K562 (cell line): ENCODE measurements at regions of chr1 and their contacts with region 1.

Region 1: GRCh38 chr1:233440951-233441401 is 113.5 kb downstream of the MAP3K21 start:
- DNase-seq: peak; percentile 37 to 79 (median 52)
- ATAC-seq: peak; percentile 90
- H3K4me3 ChIP-seq: no peak overlapping the region
- H3K27ac ChIP-seq: no peak overlapping the region
- H3K4me1 ChIP-seq: peaks cover 0 to 4% of the 10 kb centered on the region in 2 experiments; a peak in 2 of 5 replicates
- H3K27me3 ChIP-seq: no peaks in the 10 kb centered on the region
- CTCF ChIP-seq: peak; percentile 78 to 95 (median 83)
- EP300 ChIP-seq: 0 out of 2 replicates have a peak, but pooled peaks have one; percentile 12
- POLR2A ChIP-seq: no peak
- RAD21 ChIP-seq: peak; percentile 91 to 95

Region 2: DNA sequence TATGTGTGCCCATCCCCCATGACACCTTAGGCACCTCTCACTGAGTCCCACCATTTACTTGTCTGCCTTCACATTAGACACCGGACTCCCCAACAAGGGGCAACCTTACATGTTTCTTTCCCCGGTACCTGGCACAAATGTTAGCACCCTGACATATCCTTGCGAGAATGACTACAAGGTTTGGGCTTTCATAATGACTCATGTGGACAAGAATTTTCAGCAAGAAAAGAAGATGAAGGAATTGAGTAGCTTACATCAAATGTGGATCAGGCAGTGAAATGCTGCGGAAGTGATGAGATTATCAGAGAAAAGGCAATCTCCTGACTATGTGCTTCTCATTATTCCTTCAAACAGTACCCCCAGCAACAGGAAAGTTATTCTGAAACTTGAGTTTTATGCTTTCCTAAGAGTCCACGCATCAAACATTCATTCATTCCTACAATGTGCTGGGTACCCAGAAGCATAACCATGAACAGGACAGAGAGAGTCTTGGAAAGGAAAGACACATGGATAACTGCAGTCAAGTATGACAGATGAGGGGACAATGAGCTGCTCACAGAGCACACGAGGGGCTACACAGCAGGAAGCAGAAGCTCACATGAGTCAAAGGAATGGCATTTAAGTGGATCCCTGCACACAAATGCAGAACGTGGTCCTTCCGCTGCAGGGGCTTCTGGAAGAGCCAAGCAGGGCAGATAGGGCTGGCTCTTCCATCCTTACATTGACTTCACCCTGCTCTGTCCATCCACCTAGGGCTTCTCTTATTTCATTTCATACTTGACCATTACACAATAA is 257.6 kb before region 1 on chr1:
- CTCF ChIA-PET with region 1: no interaction called
- POLR2A ChIA-PET with region 1: no interaction called
- in situ Hi-C with region 1: no loop called
- intact Hi-C with region 1: no loop called
- DNase-seq: no peak
- ATAC-seq: no peak
- H3K4me3 ChIP-seq: no peak overlapping the region
- H3K27ac ChIP-seq: no peak overlapping the region
- H3K4me1 ChIP-seq: no peaks in the 10 kb centered on the region
- H3K27me3 ChIP-seq: no peaks in the 10 kb centered on the region
- CTCF ChIP-seq: no peak
- EP300 ChIP-seq: no peak
- POLR2A ChIP-seq: no peak
- RAD21 ChIP-seq: no peak

Region 3: DNA sequence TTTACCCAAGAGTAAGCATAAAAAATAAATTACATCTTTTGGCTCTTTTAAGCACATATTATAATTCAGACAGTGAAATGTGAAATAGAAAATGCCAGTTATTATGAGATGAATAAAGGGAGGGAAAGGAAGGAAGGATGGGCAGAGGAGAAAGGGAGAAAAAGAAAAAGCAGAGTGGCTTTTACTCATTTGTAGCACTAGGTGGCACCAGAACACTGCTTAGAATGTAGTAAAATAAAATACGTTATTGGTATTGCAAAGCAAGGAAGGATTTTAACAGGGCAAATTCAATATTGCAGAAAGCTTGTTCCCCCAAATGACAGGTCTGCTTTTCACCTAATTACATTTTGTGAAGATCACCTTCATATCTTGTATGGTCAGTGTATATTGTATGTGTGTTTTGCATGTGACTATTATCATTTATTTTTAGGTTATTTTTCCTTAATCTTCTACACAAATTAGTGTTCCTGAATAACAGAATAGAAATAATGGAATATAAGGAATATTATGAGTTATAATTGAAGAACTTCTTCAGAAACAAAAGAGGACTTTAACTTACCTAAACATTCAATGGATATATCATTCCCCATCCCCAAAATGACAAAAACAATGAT is 136.4 kb before region 1 on chr1:
- CTCF ChIA-PET with region 1: interaction called, 3 read pairs
- POLR2A ChIA-PET with region 1: no interaction called
- in situ Hi-C with region 1: no loop called
- intact Hi-C with region 1: loop called (anchors 5 kb)
- DNase-seq: peak; percentile 20 to 29 (median 26)
- ATAC-seq: peak; percentile 69
- H3K4me3 ChIP-seq: no peak overlapping the region
- H3K27ac ChIP-seq: no peak overlapping the region
- H3K4me1 ChIP-seq: no peaks in the 10 kb centered on the region
- H3K27me3 ChIP-seq: no peaks in the 10 kb centered on the region
- CTCF ChIP-seq: peak; percentile 45 to 82 (median 68); a peak in 5 of 6 replicates
- EP300 ChIP-seq: no peak
- POLR2A ChIP-seq: no peak
- RAD21 ChIP-seq: peak; percentile 74 to 85

Region 4: DNA sequence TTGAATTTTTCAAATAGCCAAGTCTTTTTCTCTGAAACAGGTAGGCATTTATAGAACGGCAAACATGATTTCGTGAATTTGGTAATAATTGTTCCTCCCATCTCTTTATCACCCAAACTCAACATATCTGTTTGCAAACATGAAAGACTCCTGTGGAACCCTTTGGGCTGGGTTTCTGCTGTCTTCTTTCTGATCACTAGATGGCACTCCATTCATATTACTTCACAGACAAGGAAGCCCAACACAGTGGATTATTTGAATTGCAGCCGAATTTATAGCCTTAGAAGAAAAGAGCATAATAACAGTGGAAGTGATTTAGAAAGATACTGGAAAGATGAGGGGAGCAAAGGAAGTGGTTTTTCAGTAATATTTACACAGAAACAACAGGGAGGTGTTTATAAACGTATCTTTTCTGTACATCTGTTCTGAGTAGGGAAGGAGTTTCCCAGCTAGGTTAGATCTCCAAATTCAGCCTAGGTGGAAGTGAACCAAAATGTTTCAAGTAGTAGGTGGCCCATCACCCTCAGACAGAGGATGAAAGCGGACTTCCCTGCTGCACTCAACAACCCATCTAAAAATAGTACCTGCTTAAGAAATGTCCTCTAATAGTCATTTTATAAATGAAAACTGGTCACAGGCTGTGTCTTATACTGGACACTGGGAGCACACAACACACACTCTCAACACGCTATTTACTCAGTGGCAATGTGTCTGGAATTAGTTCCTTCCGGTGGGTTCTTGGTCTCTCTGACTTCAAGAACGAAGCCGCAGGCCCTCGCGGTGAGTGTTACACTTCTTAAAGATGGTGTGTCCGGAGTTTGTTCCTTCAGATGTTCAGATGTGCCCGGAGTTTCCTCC is 45.9 kb before region 1 on chr1:
- CTCF ChIA-PET with region 1: no interaction called
- POLR2A ChIA-PET with region 1: no interaction called
- in situ Hi-C with region 1: no loop called
- intact Hi-C with region 1: loop called (anchors 2 kb)
- DNase-seq: peak; percentile 47 to 65 (median 52)
- ATAC-seq: peak; percentile 98
- H3K4me3 ChIP-seq: no peak overlapping the region
- H3K27ac ChIP-seq: no peak overlapping the region
- H3K4me1 ChIP-seq: no peaks in the 10 kb centered on the region; a peak in 1 of 5 replicates
- H3K27me3 ChIP-seq: no peaks in the 10 kb centered on the region
- CTCF ChIP-seq: peak; percentile 80 to 91 (median 83)
- EP300 ChIP-seq: no peak
- POLR2A ChIP-seq: no peak
- RAD21 ChIP-seq: peak; percentile 94 to 95

Region 5: DNA sequence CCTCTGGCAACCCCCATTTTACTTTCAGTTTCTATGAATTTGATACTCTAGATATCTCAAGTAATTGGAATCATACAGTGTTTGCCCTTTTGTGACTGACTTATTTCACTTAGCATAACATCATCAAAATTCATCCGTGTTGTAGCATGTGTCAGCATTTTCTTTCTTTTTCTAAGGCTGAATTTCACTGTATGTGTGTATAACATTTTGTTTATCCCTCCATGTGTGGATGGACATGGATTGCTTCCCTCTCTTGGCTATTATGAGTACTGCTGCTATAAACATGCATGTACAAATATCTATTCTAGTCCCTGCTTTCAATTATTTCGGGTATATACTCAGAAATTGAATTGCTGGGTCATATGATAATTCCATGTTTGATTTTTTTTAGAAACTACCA is 16.2 kb before region 1 on chr1:
- CTCF ChIA-PET with region 1: no interaction called
- POLR2A ChIA-PET with region 1: no interaction called
- in situ Hi-C with region 1: no loop called
- intact Hi-C with region 1: no loop called
- DNase-seq: no peak
- ATAC-seq: peak; percentile 49; the same call in 1 of the 3 replicates
- H3K4me3 ChIP-seq: no peak overlapping the region
- H3K27ac ChIP-seq: no peak overlapping the region
- H3K4me1 ChIP-seq: no peaks in the 10 kb centered on the region; a peak in 1 of 5 replicates
- H3K27me3 ChIP-seq: no peaks in the 10 kb centered on the region
- CTCF ChIP-seq: no peak
- EP300 ChIP-seq: no peak
- POLR2A ChIP-seq: no peak
- RAD21 ChIP-seq: no peak

Region 6: GRCh38 chr1:233904633-233905415 is 463.8 kb after region 1 on chr1 and contains the start of gene SLC35F3:
- CTCF ChIA-PET with region 1: no interaction called
- POLR2A ChIA-PET with region 1: no interaction called
- in situ Hi-C with region 1: no loop called
- intact Hi-C with region 1: loop called (anchors 1 kb)
- DNase-seq: peak; percentile 58 to 81 (median 72)
- ATAC-seq: peak; percentile 100
- H3K4me3 ChIP-seq: peak within 1 kb of the TSS; percentile 23
- H3K27ac ChIP-seq: no peak within 1 kb of the TSS
- H3K4me1 ChIP-seq: peaks cover 0 to 16% of the 10 kb centered on the region in 2 experiments; a peak in 2 of 5 replicates
- H3K27me3 ChIP-seq: peaks cover 16 to 25% of the 10 kb centered on the region in 2 experiments
- CTCF ChIP-seq: peak; percentile 31 to 72 (median 52); a peak in 3 of 6 replicates
- EP300 ChIP-seq: no peak
- POLR2A ChIP-seq: no peak
- RAD21 ChIP-seq: peak; percentile 23 to 65; a peak in 1 of 4 replicates
- polyA plus RNA-seq, gene SLC35F3: not detected